RWPE1 (cell line): ENCODE measurements at regions of chr1 and their contacts with region 1.

Region 1: DNA sequence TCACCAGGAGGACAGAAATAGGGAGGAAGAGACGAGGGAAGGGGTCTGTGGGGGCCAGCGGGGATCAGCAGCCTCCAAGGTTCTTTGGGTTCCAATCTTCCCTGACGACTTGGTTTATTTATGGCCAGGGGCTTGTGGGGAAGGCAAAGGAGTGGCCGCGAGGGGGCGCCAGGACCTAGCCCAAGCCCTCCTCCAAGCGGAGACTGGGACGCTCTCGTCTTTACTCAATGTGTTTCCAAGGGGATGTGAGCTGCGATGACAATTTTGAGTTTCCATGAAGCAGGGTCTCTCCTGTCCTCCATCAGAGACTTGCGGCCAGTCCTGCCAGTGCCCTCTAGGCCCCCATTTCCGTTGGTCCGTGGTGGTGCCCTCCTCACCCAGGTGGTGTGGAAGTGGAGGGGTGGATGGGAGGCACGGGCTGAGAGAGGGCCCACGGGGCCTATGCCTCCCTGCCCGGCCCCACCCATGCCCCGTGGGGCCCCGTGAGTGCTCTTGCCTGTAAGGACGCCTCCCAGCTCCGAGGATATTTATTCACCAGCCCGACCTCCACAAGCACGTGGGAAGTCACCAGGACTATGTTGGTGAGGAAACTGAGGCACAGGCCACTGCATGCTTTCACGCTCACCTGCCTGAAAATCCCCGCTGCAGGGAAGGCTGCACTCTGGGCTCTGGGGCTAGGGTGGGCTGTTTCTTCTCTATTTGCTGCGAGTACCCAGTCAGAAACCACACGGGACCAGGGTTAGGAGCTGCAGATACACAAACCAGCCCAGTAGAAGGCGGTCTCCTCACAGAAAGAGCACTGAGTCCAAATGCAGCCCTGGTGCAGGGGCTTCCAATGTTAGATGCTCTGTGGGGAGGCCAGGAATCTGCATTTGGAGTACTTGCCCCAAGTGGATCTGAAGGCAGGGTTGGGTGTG is 26.5 kb downstream of the DMRTB1 start:
- DNase-seq: peak; percentile 78
- H3K27ac ChIP-seq: no peak overlapping the region
- CTCF ChIP-seq: peak; percentile 68

Region 2: GRCh38 chr1:53419034-53419433 is 66.7 kb before region 1 on chr1:
- CTCF ChIA-PET with region 1: no interaction called
- POLR2A ChIA-PET with region 1: no interaction called
- DNase-seq: no peak
- H3K27ac ChIP-seq: no peak overlapping the region
- CTCF ChIP-seq: no peak

Region 3: DNA sequence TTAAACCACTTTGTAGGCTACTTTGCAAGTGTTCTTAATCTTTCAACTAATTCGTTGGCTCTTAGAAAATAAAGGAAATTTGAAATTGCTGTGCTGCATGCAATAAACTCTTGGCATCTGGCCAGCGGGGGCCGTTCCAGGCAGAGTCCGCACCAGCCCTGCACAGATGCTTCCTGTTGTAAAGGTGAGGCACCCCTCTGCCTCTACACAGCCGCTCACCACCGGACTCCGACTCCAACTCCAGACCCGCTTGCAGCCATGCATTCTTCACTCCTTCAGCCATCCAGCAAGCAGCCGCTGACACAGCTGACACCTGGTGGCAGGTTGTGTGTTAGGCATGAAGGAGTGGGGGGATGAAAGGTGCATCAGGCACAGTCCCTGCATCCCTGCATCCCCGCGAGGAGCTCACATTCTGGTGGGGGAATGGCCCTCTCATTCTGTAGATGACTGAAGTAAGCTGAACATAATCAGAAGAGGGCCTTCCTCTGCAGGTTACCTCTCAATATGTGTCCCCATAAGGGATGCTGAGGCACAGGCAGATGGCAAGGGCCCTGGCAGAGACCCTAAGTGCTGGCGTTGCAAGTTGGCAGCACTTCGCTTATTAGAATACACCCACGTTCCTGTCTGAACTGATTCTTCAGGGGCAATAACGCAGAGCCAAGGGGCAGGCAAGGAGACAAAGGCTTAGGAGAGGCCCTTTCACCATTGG is 196.4 kb after region 1 on chr1:
- CTCF ChIA-PET with region 1: interaction called, 16 read pairs
- POLR2A ChIA-PET with region 1: no interaction called
- DNase-seq: peak; percentile 70
- H3K27ac ChIP-seq: no peak overlapping the region
- CTCF ChIP-seq: peak; percentile 40

Region 4: GRCh38 chr1:53754484-53755312 is 269.0 kb after region 1 on chr1:
- CTCF ChIA-PET with region 1: no interaction called
- POLR2A ChIA-PET with region 1: no interaction called
- DNase-seq: no peak
- H3K27ac ChIP-seq: no peak overlapping the region
- CTCF ChIP-seq: peak; percentile 45